Activated CD4-positive, alpha-beta T cell treated with anti-CD3 and anti-CD28 coated beads for 36 hours (primary cell): ENCODE measurements at regions of chr17 and their contacts with region 1.

Region 1: GRCh38 chr17:32461853-32462617 is 17.7 kb downstream of the PSMD11 start:
- DNase-seq: peak; percentile 83
- ATAC-seq: peak; percentile 79
- H3K4me3 Mint-ChIP-seq: no peak overlapping the region
- H3K27ac Mint-ChIP-seq: peak overlapping the region; percentile 56
- H3K4me1 Mint-ChIP-seq: peaks cover 33% of the 10 kb centered on the region
- H3K27me3 Mint-ChIP-seq: no peaks in the 10 kb centered on the region

Region 2: DNA sequence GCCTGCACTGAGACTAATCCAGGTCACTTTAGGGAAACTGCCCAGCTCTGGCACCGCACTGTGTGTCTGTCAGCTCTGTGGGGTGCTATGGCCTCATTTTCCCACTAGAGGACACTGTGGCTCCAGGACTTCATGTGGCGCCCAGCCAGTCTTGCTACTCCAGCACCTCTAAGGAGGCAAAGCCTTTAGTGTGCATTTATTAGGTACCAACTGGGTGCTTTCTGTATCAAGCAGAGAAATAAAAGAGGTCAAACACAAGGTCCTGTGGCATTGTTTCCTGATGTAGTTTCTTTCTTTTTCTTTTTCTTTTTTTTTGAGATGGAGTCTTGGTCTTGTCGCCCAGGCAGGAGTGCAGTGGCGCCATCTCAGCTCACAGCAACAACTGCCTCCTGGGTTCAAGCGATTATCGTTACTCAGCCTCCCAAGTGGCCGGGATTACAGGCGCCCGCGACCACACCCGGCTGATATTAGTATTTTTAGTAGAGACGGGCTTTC is 208.9 kb before region 1 on chr17:
- CTCF ChIA-PET with region 1: interaction called, 5 read pairs
- POLR2A ChIA-PET with region 1: interaction called, 3 read pairs
- intact Hi-C with region 1: loop called in 1 of 2 experiments (anchors 1 kb)
- DNase-seq: peak; percentile 85
- ATAC-seq: peak; percentile 100
- H3K4me3 Mint-ChIP-seq: no peak overlapping the region
- H3K27ac Mint-ChIP-seq: no peak overlapping the region
- H3K4me1 Mint-ChIP-seq: no peaks in the 10 kb centered on the region
- H3K27me3 Mint-ChIP-seq: no peaks in the 10 kb centered on the region

Region 3: GRCh38 chr17:32298298-32298697 is 163.7 kb before region 1 on chr17:
- CTCF ChIA-PET with region 1: no interaction called
- POLR2A ChIA-PET with region 1: no interaction called
- intact Hi-C with region 1: no loop called
- DNase-seq: no peak
- ATAC-seq: no peak
- H3K4me3 Mint-ChIP-seq: no peak overlapping the region
- H3K27ac Mint-ChIP-seq: no peak overlapping the region
- H3K4me1 Mint-ChIP-seq: no peaks in the 10 kb centered on the region
- H3K27me3 Mint-ChIP-seq: no peaks in the 10 kb centered on the region

Region 4: GRCh38 chr17:32311028-32311536 is 151.0 kb before region 1 on chr17:
- CTCF ChIA-PET with region 1: no interaction called
- POLR2A ChIA-PET with region 1: no interaction called
- intact Hi-C with region 1: no loop called
- DNase-seq: no peak
- ATAC-seq: no peak
- H3K4me3 Mint-ChIP-seq: no peak overlapping the region
- H3K27ac Mint-ChIP-seq: no peak overlapping the region
- H3K4me1 Mint-ChIP-seq: no peaks in the 10 kb centered on the region
- H3K27me3 Mint-ChIP-seq: peaks cover 7% of the 10 kb centered on the region

Region 5: DNA sequence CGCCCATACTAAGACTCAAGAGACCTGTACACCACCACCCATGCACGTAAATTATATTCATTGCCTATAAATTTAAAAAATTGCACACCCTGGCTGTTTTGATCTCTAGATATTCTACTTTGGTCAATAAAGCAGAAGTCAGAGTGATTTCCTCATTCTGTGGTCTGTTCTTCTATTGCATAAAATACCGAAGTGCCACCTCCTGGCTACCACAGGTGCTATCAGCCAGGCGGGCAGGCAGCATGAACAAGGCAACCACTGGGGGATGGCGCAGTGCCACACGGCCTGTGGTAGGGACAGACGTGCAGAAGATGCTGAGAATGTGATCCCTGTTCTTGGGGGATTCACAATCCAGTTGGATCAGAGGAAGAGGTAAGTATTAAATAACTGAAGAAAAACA is 147.1 kb after region 1 on chr17:
- CTCF ChIA-PET with region 1: interaction called, 22 read pairs
- POLR2A ChIA-PET with region 1: no interaction called
- intact Hi-C with region 1: loop called (anchors 1 to 2 kb)
- DNase-seq: peak; percentile 88
- ATAC-seq: peak; percentile 100
- H3K4me3 Mint-ChIP-seq: no peak overlapping the region
- H3K27ac Mint-ChIP-seq: no peak overlapping the region
- H3K4me1 Mint-ChIP-seq: peaks cover 8% of the 10 kb centered on the region
- H3K27me3 Mint-ChIP-seq: no peaks in the 10 kb centered on the region

Region 6: DNA sequence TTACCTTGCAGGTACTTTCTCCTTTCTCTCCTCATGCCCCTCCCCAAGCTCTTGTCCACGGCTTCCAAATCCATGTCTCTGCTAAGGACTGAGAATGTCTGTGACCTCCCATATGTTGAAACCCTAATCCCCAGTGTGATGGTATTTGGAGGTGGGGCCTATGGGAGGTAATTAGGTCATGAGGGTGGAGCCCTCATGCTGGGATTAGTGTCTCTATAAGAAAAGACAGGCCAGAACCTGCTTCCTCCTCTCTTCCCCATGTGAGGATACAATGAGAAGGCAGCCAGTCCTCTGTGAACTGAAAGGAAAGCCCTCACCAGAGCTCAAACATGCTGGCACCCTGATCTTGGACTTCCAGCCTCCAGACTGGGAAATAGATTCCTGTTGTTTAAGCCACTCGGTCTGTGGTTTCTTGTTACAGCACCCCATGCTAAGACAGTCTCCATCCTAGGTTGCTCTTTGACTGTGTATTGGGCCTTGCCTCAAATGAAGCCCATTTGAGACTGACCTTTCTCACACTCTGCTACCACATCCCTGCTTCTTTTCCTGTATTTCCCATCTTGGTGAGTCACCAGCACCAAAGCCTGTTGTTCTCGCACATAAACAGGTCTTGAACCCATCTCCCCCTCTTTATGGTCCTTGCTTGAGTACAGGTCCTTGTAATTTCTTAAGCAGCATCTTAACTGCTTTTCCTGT is 159.7 kb after region 1 on chr17:
- CTCF ChIA-PET with region 1: interaction called, 11 read pairs
- POLR2A ChIA-PET with region 1: no interaction called
- intact Hi-C with region 1: no loop called
- DNase-seq: no peak
- ATAC-seq: no peak
- H3K4me3 Mint-ChIP-seq: no peak overlapping the region
- H3K27ac Mint-ChIP-seq: no peak overlapping the region
- H3K4me1 Mint-ChIP-seq: no peaks in the 10 kb centered on the region
- H3K27me3 Mint-ChIP-seq: no peaks in the 10 kb centered on the region

Region 7: GRCh38 chr17:32659419-32659842 is 197.4 kb after region 1 on chr17:
- CTCF ChIA-PET with region 1: interaction called, 12 read pairs
- POLR2A ChIA-PET with region 1: no interaction called
- intact Hi-C with region 1: loop called in 1 of 2 experiments (anchors 5 kb)
- DNase-seq: peak; percentile 81
- ATAC-seq: peak; percentile 74
- H3K4me3 Mint-ChIP-seq: no peak overlapping the region
- H3K27ac Mint-ChIP-seq: no peak overlapping the region
- H3K4me1 Mint-ChIP-seq: no peaks in the 10 kb centered on the region
- H3K27me3 Mint-ChIP-seq: no peaks in the 10 kb centered on the region